OCI-LY7 (cell line): ENCODE measurements at regions of chr2 and their contacts with region 1.

Region 1: DNA sequence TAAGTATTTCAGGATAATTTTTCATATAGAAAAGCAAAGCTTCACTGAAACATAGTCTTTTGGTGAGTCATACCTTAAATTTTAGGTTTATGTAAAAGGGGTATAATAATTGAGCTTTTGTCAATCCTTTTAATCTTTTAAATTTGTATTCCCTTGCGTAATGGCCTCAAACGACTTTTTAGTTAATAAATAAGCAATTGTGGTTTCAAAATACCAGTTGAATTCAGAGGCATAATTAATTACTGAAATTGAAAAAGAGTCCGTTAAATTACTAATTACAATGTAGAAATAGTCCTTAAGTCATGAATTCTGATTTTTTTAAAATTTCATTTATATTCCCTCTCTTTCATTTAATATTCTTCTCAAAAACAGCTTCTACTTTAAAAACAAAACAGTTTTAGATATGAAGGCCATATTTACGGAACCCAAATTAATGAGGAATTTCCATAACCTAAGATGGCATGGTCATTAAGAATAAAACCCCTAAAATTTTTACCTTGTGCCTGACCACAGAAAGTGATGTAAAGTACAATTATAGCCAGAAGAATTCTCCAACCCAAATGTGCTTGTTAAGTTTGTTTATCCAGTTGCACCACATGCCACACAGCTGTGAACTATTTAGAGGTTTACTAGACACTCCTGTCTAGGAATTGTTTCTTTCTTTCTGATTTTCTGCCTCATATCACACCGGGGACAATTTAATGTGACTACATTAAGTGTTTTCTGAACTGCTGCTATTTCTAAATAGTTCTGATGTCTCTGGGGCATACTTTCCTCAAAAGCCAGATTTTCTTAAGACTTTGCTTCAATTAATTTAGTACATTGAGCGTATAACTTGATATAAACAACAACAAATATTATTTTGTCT is 60.7 kb upstream of the ITGA4 start:
- DNase-seq: peak; percentile 35
- H3K4me3 ChIP-seq: no peak overlapping the region
- H3K27ac ChIP-seq: no peak overlapping the region
- H3K4me1 ChIP-seq: peaks cover 14% of the 10 kb centered on the region
- CTCF ChIP-seq: no peak

Region 2: GRCh38 chr2:181319286-181319685 is 77.2 kb before region 1 on chr2:
- CTCF ChIA-PET with region 1: no interaction called
- POLR2A ChIA-PET with region 1: interaction called, 10 read pairs
- intact Hi-C with region 1: no loop called
- DNase-seq: no peak
- H3K4me3 ChIP-seq: no peak overlapping the region
- H3K27ac ChIP-seq: no peak overlapping the region
- H3K4me1 ChIP-seq: peaks cover 4% of the 10 kb centered on the region
- CTCF ChIP-seq: no peak

Region 3: GRCh38 chr2:181362561-181362960 is 33.9 kb before region 1 on chr2:
- CTCF ChIA-PET with region 1: no interaction called
- POLR2A ChIA-PET with region 1: no interaction called
- intact Hi-C with region 1: no loop called
- DNase-seq: no peak
- H3K4me3 ChIP-seq: no peak overlapping the region
- H3K27ac ChIP-seq: no peak overlapping the region
- H3K4me1 ChIP-seq: peaks cover 12% of the 10 kb centered on the region
- CTCF ChIP-seq: no peak

Region 4: DNA sequence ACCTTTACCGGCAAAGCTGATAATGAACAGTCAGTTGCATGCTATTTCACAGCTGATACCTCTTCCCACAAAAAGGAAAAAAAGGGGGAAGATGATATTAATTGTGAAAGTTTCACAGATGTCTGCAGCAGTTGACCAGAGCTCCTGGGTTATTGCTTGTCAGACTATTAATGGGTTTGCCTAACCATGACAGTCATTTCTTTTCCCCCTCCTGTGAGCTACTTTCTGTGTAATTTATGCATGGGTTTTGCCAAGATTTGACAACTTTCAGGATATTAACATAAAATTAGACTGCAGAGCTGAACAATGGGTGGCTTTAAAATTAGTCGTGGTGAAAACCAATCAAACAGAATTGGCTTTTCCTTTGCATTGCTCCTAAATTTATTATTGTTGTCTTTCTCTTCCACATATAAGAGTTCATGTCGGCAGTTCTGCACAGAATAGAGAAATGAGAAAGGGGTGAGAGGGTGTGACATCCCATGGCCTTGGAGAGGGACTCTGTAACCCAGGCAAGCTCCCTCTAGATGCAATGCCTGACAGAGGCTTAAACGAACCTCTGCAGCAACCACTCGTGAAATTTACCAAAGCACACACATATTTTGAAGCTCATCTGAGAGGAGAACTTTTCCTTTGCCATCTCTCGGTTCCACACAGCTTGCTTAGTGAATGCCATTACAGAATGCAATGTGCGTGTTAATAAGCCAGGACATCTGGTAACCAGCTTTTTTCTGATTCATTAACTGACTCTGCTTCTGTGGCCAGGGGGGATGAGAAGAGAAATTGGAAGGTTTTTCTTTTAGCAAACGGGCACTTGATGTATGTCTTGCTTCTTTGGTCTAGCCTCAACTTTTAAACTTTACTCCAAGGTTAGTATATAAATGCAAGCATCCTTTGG is 21.5 kb before region 1 on chr2:
- CTCF ChIA-PET with region 1: no interaction called
- POLR2A ChIA-PET with region 1: interaction called, 13 read pairs
- intact Hi-C with region 1: no loop called
- DNase-seq: no peak
- H3K4me3 ChIP-seq: no peak overlapping the region
- H3K27ac ChIP-seq: no peak overlapping the region
- H3K4me1 ChIP-seq: peaks cover 37% of the 10 kb centered on the region
- CTCF ChIP-seq: no peak

Region 5: DNA sequence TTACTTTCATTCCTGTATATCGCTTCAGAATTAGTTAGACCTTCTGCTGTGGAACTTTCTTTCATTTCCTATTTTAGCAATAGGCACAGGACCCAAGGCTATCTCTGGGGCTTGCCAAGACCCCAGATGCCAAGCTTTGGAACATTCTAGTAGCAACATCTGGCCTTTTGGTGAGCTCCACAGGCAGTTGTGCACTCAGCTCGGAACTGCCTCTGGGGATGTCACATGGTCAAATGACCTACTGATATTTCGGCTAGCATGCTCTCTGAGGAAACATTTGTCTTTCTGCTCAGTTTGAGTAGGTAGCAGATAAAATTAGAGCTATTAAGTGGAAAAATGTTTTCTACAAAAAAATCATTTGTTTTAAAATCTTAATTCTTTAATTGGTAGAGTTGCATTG is 15.9 kb before region 1 on chr2:
- CTCF ChIA-PET with region 1: no interaction called
- POLR2A ChIA-PET with region 1: interaction called, 22 read pairs
- intact Hi-C with region 1: no loop called
- DNase-seq: no peak
- H3K4me3 ChIP-seq: no peak overlapping the region
- H3K27ac ChIP-seq: no peak overlapping the region
- H3K4me1 ChIP-seq: peaks cover 11% of the 10 kb centered on the region
- CTCF ChIP-seq: no peak

Region 6: DNA sequence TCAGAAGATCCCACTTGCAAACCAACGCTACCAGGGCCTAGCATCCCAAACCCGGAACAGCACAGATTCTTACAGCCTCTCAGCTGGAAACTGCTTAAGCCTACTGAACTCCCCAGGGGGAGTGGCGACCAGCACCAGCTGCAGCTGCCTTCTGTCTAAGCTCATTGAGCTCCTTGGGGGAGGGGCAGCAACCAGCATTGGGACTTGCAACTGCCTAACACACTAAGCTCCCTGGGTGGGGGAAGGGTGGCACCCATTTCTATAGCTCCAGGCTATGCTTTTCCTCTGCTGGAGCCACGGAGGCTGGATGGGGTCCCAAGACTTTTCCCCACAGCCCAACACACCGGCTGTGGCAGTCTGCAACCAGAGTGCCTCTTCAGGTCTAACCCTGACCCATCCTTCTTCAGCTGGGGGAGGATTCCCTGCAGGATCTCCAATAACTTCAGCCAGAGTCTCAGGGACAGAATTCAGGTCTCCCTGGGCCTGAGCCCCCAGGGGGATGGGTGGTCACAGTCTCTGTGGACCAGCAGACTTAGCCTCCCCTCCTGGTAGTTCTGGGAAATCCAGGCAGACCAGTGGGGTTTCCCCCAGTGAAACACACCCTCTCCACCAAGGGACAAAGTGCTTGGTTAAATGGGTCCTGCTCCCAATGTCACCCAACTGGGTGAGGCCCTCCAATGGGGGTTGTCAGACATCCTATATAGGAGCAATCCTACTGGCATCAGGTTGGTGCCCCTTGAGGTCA is 14.8 kb after region 1 on chr2:
- CTCF ChIA-PET with region 1: no interaction called
- POLR2A ChIA-PET with region 1: interaction called, 10 read pairs
- intact Hi-C with region 1: no loop called
- DNase-seq: peak; percentile 100
- H3K4me3 ChIP-seq: peak overlapping the region; percentile 42
- H3K27ac ChIP-seq: peak overlapping the region; percentile 71
- H3K4me1 ChIP-seq: peaks cover 57% of the 10 kb centered on the region
- CTCF ChIP-seq: peak; percentile 14; the same call in 1 of the 2 replicates

Region 7: DNA sequence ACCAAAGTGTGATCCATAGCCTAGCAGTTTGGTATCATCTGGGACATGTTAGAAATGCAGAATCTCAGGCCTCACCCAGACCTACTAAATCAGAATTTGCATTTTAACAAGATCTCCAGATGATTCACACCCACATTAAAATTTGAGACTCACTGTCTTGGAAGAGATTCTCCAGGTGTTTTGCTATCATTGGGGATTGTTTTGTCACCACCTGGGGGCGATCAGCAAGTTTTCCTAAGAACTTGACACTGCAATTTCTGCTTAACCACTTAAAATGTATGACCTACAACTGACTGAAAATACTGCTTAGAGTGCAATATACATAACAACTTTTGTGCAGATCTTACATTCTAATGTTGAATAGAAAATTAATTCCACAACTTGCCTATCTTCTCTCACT is 41.8 kb after region 1 on chr2:
- CTCF ChIA-PET with region 1: no interaction called
- POLR2A ChIA-PET with region 1: no interaction called
- intact Hi-C with region 1: no loop called
- DNase-seq: peak; percentile 74
- H3K4me3 ChIP-seq: no peak overlapping the region
- H3K27ac ChIP-seq: no peak overlapping the region
- H3K4me1 ChIP-seq: peaks cover 15% of the 10 kb centered on the region
- CTCF ChIP-seq: peak; percentile 84

Region 8: DNA sequence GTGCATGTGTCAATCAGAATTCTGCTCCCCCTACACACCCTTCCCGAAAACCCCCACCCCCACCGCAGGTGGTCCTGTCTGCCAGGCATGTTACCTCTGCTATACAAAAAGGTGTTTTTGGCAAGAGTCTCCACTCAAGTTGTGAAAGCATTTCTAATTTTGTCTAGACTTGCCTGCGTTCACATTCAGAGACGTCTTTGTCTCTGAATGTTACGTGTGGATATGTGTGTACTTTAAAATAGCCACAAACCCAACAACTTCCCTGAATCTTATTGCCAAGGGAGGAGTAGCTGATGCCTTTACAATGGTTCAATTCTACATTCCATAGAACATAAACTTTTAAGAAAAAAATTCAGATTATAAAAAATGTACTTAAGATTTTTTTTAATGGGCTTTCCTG is 127.3 kb after region 1 on chr2:
- CTCF ChIA-PET with region 1: no interaction called
- POLR2A ChIA-PET with region 1: no interaction called
- intact Hi-C with region 1: no loop called
- DNase-seq: no peak
- H3K4me3 ChIP-seq: no peak overlapping the region
- H3K27ac ChIP-seq: no peak overlapping the region
- H3K4me1 ChIP-seq: no peaks in the 10 kb centered on the region
- CTCF ChIP-seq: no peak

Region 9: DNA sequence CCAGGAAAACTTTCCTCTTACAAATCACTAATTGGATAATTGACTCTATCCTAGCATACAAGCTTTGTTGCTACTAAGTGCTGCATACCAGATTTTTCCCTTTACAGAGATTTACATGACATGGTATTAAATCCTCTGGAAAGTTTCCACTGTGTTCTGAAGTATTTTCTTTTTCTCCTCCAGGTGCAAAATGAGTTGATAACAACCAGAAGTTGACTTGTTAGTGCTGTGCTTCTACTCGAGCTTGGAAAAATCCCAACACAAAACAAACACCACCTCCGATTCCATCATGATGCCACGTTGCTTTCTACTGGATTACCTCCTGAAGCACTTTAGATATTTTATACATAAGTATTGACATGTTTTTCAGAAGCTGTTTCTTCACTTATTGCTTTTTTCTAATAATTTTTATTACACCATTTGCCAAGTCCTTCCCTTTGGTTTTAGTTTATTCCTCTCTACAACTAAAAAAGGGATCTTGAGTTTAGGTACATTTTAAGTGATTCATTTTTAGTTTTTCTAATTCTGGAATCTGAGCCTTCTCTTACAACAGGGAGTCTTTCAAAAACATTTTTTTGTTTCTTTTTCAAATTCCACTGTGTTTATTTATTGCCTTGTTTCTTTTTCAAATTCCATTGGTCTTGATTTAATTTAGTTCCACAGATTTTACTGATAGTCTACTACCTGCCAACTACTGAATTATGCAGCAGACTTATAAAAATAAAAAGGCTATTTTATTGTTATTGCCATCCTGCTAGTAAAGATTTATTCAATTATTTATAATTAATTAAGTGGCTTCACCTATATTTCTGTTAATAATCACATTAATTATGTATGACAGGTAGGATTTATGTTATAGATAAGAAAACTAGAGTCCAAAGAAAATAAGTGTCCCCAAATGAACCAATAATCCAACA is 732.6 kb after region 1 on chr2:
- CTCF ChIA-PET with region 1: no interaction called
- POLR2A ChIA-PET with region 1: no interaction called
- intact Hi-C with region 1: no loop called
- DNase-seq: no peak
- H3K4me3 ChIP-seq: no peak overlapping the region
- H3K27ac ChIP-seq: no peak overlapping the region
- H3K4me1 ChIP-seq: no peaks in the 10 kb centered on the region
- CTCF ChIP-seq: no peak